GM13977 (cell line): ENCODE measurements at regions of chr5 and their contacts with region 1.

Region 1: DNA sequence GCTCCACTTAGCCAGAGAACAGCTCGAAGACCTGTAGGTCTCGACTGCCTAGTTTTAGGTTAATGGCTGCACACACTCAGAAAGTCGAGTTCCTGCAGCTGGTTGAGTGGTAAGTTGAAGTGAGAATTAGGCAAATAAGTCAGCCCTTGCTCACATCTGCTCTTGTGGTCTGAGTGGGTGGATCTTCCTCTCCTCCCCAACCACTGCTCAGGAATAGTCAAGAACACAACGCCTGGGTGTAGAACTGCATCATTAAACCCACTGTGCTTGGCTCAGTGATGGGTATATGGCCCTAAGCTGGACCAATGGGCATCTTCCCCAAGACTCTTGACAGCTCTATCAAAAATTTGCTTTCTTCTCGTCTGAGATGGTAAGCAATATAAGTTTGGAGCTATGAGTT is 20.9 kb upstream of the ADAM19 start:
- DNase-seq: no peak
- CTCF ChIP-seq: no peak

Region 2: GRCh38 chr5:157502143-157502647 is 94.3 kb before region 1 on chr5:
- in situ Hi-C with region 1: loop called (anchors 10 kb)
- DNase-seq: peak; percentile 59
- CTCF ChIP-seq: no peak

Region 3: GRCh38 chr5:157820593-157821252 is 224.2 kb after region 1 on chr5:
- in situ Hi-C with region 1: no loop called
- DNase-seq: peak; percentile 18
- CTCF ChIP-seq: peak; percentile 51